Esophagus squamous epithelium (tissue), 5 donors: ENCODE measurements at regions of chr19 and their contacts with region 1.

Region 1: DNA sequence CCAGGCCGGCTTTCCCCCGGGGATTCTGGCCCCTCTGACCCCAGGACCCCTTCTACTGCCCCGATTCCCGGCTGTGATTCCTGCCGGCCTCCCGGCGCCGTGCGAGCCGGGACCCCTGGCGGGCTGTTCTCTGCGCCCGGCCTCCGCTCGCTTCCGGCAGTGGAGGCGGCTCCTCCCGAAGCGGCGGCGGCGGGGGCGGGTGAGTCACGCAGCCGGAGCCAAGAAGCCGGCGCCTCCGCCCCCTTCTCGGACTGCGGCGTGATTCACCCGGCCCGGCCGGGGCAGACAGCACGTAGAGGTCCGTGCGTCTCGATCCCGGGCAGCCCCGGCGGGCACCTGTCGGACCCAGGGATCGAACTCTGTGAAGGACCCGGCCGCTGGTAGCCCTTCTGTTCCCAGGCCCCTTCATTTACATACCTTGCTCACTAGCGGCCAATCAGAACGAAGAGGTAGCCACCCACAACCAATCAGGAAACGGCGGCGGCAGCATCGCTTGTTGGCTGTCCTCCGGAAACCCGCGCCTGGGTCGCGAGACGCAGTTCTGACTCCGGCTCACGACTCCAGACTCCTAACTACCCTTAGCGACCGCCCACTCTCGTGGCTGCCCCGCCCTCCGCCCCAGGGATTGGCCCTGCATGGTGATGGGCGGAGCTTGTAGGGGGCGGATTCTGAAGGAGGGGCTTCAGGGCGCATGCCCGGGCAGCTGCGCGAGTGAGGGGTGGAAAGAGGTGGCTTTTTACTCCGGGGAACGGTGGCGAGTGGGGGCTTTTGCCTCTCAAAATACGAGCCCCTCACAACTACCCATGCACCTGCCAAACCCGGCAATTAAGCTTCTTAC is at the start of gene SERTAD1:
- DNase-seq: peak; percentile 96
- H3K4me3 ChIP-seq: peak within 1 kb of the TSS; percentile 77 to 95 (median 94)
- H3K27ac ChIP-seq: peak within 1 kb of the TSS; percentile 99 to 100 (median 100)
- H3K4me1 ChIP-seq: peaks cover 15 to 57% (median 38%) of the 10 kb centered on the region in 3 donors
- H3K27me3 ChIP-seq: no peaks in the 10 kb centered on the region
- CTCF ChIP-seq: peak; percentile 39 to 76 (median 70)
- POLR2A ChIP-seq: peak in 3 of 4 donors; percentile 94 to 99 (median 98)
- total RNA-seq, gene SERTAD1: 10.2 to 24.9 (median 16.2) TPM

Region 2: GRCh38 chr19:40603389-40604135 is 177.9 kb after region 1 on chr19:
- intact Hi-C with region 1: loop called (anchors 10 kb)
- DNase-seq: peak; percentile 74
- H3K4me3 ChIP-seq: peak overlapping the region; percentile 25 to 81 (median 60)
- H3K27ac ChIP-seq: peak overlapping the region; percentile 95 to 97 (median 96)
- H3K4me1 ChIP-seq: peaks cover 70 to 99% (median 81%) of the 10 kb centered on the region in 3 donors
- H3K27me3 ChIP-seq: peaks cover 0 to 31% (median 0%) of the 10 kb centered on the region in 4 donors
- CTCF ChIP-seq: no peak
- POLR2A ChIP-seq: peak in 3 of 4 donors; percentile 31 to 71 (median 61)